Ascending aorta (tissue), 2 donors: ENCODE measurements at regions of chr7 and their contacts with region 1.

Region 1: DNA sequence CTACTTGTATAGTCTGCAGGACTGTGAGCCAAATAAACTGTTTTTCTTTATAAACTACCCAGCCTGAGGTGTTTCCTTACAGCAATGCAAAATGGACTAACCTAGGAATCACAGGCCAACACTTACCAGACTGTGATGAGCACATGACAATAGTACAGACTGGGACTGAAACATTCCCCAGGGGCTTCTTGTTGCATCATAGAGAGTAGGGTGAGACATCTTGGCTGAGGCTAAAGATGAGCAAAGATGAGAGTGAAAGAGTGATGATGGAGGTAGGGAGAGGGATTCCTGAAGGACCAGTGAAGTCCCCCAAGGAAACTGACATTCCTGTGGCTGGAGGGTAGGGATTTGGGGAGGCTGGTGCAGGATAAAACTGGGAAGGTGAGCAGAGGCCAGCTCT is 194.4 kb downstream of the TPST1 start:
- DNase-seq: no peak
- H3K4me3 ChIP-seq: no peak overlapping the region
- H3K27ac ChIP-seq: no peak overlapping the region
- H3K4me1 ChIP-seq: no peaks in the 10 kb centered on the region
- H3K27me3 ChIP-seq: no peaks in the 10 kb centered on the region
- CTCF ChIP-seq: no peak

Region 2: GRCh38 chr7:66330961-66331360 is 68.6 kb before region 1 on chr7:
- intact Hi-C with region 1: loop called (anchors 10 kb)
- DNase-seq: no peak
- H3K4me3 ChIP-seq: no peak overlapping the region
- H3K27ac ChIP-seq: peak overlapping the region; percentile 4
- H3K4me1 ChIP-seq: peaks cover 0 to 7% of the 10 kb centered on the region in 2 donors
- H3K27me3 ChIP-seq: no peaks in the 10 kb centered on the region
- CTCF ChIP-seq: no peak